ENCODE measurements at regions of chr22 and their contacts with region 1.

Region 1: DNA sequence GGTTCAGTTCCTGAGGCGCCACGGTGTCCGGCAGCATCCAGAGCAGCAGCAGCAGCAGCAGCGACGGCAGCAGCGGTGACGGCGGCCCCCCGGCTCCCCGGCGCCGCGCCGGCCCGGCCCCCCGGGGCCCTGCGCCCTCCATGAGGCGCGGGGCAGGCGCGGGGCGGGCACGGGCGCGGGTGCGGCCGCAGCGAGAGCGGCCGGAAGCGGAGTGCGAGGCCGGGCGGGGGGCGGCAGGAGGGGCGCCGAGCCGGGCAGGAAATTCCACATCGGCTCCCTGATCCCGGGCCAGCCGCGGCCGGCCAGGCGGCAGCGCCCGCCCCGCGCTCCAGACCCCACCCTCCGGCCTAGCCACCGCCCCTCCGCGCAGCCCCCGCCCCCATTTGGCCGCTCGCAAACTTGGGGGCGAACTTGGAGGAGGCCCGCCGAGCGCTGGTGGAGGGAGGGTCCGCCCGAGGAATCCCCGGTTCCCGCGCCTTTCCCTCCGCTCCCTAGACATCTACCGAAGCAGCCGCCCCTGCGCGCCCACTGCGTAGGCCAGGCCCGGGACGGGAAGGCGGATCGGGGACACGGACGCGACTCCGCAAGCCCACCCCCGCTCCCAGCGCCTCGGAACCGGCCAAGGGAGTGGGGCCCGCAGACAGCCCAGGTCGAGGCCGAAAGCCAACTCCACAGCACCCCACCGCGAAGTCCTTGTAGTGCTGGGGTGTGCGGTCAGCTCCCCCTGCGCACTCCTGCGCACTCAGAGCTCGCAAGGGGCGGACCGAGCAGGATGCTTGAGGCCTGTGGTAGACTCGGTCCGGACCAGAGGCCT is at the start of gene SCARF2:
- DNase-seq: peak; percentile 62
- ATAC-seq: peak; percentile 76
- H3K4me3 ChIP-seq: peak within 1 kb of the TSS; percentile 90
- H3K27ac ChIP-seq: peak within 1 kb of the TSS; percentile 91
- H3K4me1 ChIP-seq: peaks cover 24% of the 10 kb centered on the region
- H3K27me3 ChIP-seq: no peaks in the 10 kb centered on the region
- CTCF ChIP-seq: no peak
- POLR2A ChIP-seq: no peak
- RAD21 ChIP-seq: no peak
- total RNA-seq, gene SCARF2: 3.4 and 4.2 TPM in 2 replicates

Region 2: GRCh38 chr22:20495861-20496681 is 58.3 kb after region 1 on chr22:
- CTCF ChIA-PET with region 1: no interaction called
- POLR2A ChIA-PET with region 1: no interaction called
- dilution Hi-C with region 1: no loop called
- in situ Hi-C with region 1: no loop called
- intact Hi-C with region 1: loop called (anchors 1 kb)
- DNase-seq: peak; percentile 87
- ATAC-seq: peak; percentile 95
- H3K4me3 ChIP-seq: peak overlapping the region; percentile 71
- H3K27ac ChIP-seq: peak overlapping the region; percentile 75
- H3K4me1 ChIP-seq: peaks cover 3% of the 10 kb centered on the region
- H3K27me3 ChIP-seq: no peaks in the 10 kb centered on the region
- CTCF ChIP-seq: peak; percentile 90
- POLR2A ChIP-seq: peak; percentile 93
- RAD21 ChIP-seq: peak; percentile 69